ENCODE measurements at regions of chr20 and their contacts with region 1.

Region 1: DNA sequence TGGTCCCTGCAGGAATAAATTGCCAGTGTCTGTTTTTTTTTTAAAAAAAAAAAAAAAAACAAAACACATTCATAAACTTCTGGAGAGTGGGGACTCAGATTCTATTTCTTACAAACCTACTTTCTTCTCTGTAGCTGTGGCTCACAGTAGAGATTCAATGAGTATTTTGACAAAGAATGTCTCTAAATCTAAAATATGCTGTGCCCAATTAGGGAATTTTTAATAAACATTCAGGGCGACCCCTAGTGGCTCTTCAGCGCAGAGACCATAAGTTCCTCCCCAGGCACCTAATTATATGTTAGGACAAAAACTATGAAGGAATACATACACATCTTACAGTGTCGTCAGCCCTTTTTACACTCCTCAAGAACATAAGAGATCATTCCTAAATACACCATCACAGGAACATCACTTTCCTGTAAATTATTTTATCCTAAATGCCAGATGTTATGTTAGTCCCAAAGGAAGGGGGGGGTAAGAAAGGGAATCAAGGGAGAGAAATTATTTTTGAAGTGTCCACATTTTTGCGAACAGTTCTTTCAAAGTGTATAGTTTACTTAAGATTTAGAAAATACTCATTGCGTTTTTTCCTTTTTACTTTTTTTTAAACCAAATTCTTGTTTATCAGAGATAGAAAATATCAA is 21.8 kb upstream of the NAA20 start:
- DNase-seq: no peak
- ATAC-seq: no peak
- H3K4me3 ChIP-seq: no peak overlapping the region
- H3K27ac ChIP-seq: peak overlapping the region; percentile 78 to 91 (median 80)
- H3K4me1 ChIP-seq: peaks cover 58 to 81% of the 10 kb centered on the region in 2 donors
- H3K27me3 ChIP-seq: no peaks in the 10 kb centered on the region
- CTCF ChIP-seq: peak; percentile 71 to 85 (median 83)
- POLR2A ChIP-seq: no peak

Region 2: GRCh38 chr20:19921284-19921793 is 74.0 kb before region 1 on chr20:
- in situ Hi-C with region 1: no loop called
- intact Hi-C with region 1: loop called (anchors 5 kb)
- DNase-seq: peak; percentile 49 to 81
- ATAC-seq: peak; percentile 89 to 90
- H3K4me3 ChIP-seq: peak overlapping the region; percentile 18 to 42 (median 32)
- H3K27ac ChIP-seq: peak overlapping the region; percentile 73 to 87 (median 82)
- H3K4me1 ChIP-seq: peaks cover 56 to 67% of the 10 kb centered on the region in 2 donors
- H3K27me3 ChIP-seq: no peaks in the 10 kb centered on the region
- CTCF ChIP-seq: no peak
- POLR2A ChIP-seq: no peak